Ascending aorta (tissue), 2 donors: ENCODE measurements at regions of chr20 and their contacts with region 1.

Region 1: DNA sequence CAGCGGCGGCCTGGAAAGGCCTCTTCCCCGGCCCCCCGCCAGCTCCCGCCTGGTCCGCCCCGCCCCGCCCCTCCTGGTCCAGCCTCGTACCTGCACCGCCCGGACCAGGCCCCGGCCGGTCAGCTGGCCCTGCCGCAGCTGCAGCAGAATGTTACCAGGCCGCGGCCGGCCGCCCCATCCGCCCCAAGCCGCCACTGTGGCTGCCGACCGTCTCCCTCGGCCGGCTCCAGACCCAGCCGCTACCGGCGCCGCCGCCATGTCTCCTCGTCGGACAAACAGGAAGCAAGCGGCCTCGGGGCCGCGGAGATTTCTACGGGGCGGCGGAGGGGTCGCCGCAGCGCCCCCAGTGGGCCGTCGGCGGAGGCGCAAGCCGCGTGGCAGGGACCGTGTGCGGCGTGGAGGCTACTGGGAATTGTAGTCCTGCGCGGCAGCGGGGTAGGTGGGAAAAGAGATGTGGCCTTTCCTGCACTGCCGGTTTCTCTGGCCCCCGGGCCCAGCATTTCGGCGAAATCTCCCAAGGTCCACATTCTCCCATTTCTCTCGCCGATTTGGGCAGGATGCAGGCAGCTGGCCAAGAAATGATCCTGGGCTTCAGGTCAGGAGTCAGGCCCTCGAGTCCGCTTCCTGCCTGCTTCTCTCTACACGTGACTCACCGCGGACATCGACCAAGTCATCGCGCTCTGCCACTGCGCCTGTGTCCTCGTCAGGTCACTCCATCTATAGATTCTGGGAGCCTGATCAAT is at the start of gene TRPC4AP:
- DNase-seq: peak; percentile 49 to 93
- H3K4me3 ChIP-seq: peak within 1 kb of the TSS; percentile 95 to 99
- H3K27ac ChIP-seq: peak within 1 kb of the TSS; percentile 97
- H3K4me1 ChIP-seq: peaks cover 0 to 25% of the 10 kb centered on the region in 2 donors
- H3K27me3 ChIP-seq: no peaks in the 10 kb centered on the region
- CTCF ChIP-seq: peak; percentile 95 to 99 (median 98)
- total RNA-seq, gene TRPC4AP: 54.1 TPM

Region 2: DNA sequence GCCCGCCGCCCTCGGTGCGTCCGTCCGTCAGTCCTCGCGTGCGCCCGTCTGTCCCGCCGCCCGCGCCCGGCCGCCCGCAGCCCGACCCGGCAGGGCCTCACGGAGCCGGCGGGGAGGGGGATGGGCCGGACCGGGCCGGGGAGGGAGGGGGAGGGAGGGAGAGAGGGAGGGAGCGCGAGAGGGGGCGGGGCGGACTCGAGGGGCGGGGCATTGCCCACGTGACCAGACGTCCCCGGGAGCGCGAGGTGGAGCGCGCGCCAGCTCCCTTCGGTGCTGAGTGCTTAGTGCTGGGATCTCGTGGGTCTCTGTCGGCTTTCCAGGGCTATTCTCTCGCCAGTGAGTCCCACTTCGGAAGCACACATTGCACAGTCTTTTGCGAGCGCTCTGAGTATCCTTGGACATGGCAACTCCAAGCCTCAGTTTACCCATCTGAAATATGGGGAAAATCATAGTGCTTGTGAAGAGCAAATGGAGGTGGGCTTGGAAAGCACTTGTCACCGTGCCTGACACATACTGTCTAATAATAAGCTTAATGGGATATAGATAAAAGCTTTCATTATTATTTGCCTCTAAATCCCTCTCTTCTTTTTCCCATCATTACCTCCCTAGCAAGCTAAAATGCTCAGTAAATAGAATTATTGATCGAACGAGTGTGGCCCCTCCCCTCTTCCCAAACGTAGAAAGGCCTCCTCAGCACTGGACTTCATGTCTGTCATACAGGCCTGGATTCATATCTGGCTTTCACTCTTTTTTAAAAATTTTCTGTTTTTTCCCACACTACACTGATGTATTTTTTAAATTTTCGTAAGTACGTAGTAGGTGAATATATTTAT is 266.9 kb before region 1 on chr20 and contains the start of gene NCOA6:
- intact Hi-C with region 1: loop called (anchors 5 kb)
- DNase-seq: peak; percentile 30 to 90
- H3K4me3 ChIP-seq: peak within 1 kb of the TSS; percentile 89 to 99
- H3K27ac ChIP-seq: peak within 1 kb of the TSS; percentile 62 to 70
- H3K4me1 ChIP-seq: peaks cover 0 to 13% of the 10 kb centered on the region in 2 donors
- H3K27me3 ChIP-seq: no peaks in the 10 kb centered on the region
- CTCF ChIP-seq: no peak
- total RNA-seq, gene NCOA6: 21.6 TPM

Region 3: GRCh38 chr20:34955232-34956040 is 137.3 kb before region 1 on chr20 and contains the starts of genes GSS and MYH7B:
- intact Hi-C with region 1: loop called (anchors 2 kb)
- DNase-seq: peak; percentile 93 to 99
- H3K4me3 ChIP-seq: peak within 1 kb of the TSS; percentile 60 to 74
- H3K27ac ChIP-seq: peak within 1 kb of the TSS; percentile 89 to 91
- H3K4me1 ChIP-seq: peaks cover 4 to 5% of the 10 kb centered on the region in 2 donors
- H3K27me3 ChIP-seq: no peaks in the 10 kb centered on the region
- CTCF ChIP-seq: peak; percentile 49 to 85 (median 77)
- total RNA-seq, gene GSS: 40.7 TPM
- total RNA-seq, gene MYH7B: 4.7 TPM

Region 4: DNA sequence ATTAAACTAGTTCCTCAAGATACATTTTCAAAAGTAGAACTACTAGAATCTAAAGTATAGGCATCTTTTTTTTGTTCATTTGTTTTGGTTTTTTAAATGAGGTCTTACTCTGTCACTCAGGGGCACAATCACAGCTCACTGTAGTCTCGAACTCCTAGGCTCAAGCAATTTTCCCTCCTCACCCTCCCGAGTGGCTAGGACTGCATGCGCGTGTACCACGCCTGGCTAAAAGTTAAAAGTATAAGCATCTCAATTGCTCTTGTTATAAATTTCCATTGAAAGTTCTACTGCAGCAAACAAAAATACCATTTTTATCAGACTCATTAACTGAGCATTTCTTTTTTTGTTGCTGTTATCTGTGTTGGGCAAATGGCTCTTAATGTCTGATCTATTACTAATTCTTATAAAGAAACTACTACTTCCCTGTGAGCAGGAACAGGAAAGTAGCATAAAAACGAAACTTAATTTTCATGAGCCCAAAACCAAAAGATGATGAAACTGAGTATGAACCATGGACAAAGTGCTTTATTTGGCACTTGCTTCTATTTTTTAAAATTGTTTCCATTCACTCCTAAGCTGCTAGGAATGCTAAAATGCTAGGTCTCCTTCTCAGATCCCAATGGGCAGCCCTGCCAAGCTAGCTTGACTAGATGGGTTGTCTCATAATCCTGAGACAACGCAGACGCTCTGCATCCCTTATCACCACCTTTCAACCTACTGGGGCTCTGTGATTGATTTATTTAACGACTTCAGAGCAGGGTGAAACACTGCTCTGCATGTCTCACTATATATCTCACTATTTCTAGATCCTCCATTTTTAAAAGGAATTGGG is 37.0 kb before region 1 on chr20:
- intact Hi-C with region 1: loop called (anchors 2 kb)
- DNase-seq: peak in 1 of 2 donors; percentile 76
- H3K4me3 ChIP-seq: peak overlapping the region in 1 of 2 donors; percentile 29
- H3K27ac ChIP-seq: peak overlapping the region; percentile 60 to 70
- H3K4me1 ChIP-seq: peaks cover 3 to 29% of the 10 kb centered on the region in 2 donors
- H3K27me3 ChIP-seq: no peaks in the 10 kb centered on the region
- CTCF ChIP-seq: no peak

Region 5: GRCh38 chr20:35207950-35208611 is 115.4 kb after region 1 on chr20:
- intact Hi-C with region 1: loop called (anchors 1 kb)
- DNase-seq: peak in 1 of 2 donors; percentile 89
- H3K4me3 ChIP-seq: peak overlapping the region in 1 of 2 donors; percentile 42
- H3K27ac ChIP-seq: peak overlapping the region; percentile 77 to 79
- H3K4me1 ChIP-seq: peaks cover 0 to 4% of the 10 kb centered on the region in 2 donors
- H3K27me3 ChIP-seq: no peaks in the 10 kb centered on the region
- CTCF ChIP-seq: peak; percentile 60 to 87 (median 79)